ENCODE measurements at regions of chr20 and their contacts with region 1.

Region 1: DNA sequence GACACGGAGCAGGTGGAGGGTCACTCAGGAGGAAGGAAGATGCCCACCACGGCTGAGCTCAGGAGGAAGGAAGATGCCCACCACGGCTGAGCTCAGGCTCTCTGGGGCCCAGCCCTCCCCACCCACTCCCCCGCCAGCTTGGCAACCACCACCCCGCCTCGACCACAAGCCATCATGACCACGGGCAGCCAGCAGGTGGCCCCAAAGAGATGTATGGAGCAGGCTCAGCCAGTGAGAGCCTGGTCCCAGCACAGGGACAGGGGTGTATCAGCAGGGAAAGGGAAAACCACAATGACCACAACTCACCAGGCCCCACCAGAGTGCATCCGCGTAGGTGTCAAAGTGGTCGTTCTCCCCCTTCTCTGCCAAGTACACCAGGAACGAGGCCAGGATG is 30.4 kb downstream of the KCNQ2 start:
- DNase-seq: no peak

Region 2: DNA sequence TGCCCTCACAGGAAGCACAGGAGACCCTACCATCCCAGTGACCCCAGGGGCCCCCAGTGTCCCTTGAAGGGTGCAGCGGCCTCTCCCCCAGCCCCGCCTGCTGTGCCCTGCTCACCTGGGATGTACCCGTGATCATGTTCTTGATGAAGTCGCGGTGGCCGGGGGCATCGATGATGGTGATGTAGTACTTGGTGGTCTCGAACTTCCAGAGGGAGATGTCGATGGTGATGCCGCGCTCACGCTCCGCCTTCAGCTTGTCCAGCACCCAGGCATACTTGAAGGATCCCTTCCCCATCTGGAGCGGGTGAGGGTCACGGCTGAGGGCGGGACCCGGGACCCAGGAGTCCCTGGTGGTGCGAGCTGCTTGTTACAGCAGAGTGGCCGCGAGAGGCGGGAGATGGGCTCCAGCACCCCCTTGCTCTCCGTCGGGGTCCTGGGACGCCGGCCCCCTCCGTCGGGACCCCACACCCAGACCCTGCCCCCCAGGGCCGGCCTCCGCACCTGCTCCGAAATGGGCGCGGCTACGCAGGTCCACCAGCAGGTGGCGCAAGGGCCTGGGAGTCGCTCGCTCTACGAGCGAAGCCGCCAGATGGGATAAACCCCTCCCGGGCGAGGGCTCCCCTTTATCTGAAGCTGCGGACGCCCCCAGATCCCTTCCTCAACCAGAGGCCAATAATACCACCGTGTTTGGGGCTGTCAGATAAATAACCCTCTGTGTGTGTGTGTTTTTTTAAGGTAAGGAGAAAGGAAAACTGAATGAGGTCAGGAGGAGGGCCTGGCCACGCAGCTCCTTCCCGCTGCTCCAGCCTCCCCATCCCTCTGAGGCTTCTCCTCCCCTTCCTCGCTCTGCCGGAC is 53.9 kb after region 1 on chr20:
- intact Hi-C with region 1: loop called (anchors 5 kb)
- DNase-seq: peak; percentile 89

Measured in cardiac septum (tissue), 1 donor.